ENCODE measurements at regions of chr13 and their contacts with region 1.

Region 1: GRCh38 chr13:79560953-79561352 is 80.0 kb downstream of the NDFIP2 start:
- DNase-seq: peak; percentile 55
- H3K4me3 ChIP-seq: no peak overlapping the region
- H3K27ac ChIP-seq: no peak overlapping the region
- H3K4me1 ChIP-seq: peaks cover 3% of the 10 kb centered on the region
- H3K27me3 ChIP-seq: no peaks in the 10 kb centered on the region
- CTCF ChIP-seq: no peak

Region 2: GRCh38 chr13:79621449-79621848 is 60.5 kb after region 1 on chr13:
- CTCF ChIA-PET with region 1: no interaction called
- dilution Hi-C with region 1: no loop called
- in situ Hi-C with region 1: no loop called
- intact Hi-C with region 1: loop called (anchors 5 kb)
- DNase-seq: peak; percentile 68
- H3K4me3 ChIP-seq: no peak overlapping the region
- H3K27ac ChIP-seq: peak overlapping the region; percentile 95
- H3K4me1 ChIP-seq: peaks cover 44% of the 10 kb centered on the region
- H3K27me3 ChIP-seq: no peaks in the 10 kb centered on the region
- CTCF ChIP-seq: no peak

Measured in mammary epithelial cell (primary cell).